ENCODE measurements at regions of chr6 and their contacts with region 1.

Region 1: GRCh38 chr6:134193536-134194498 is 124.1 kb downstream of the SGK1 start:
- DNase-seq: no peak
- H3K4me3 Mint-ChIP-seq: no peak overlapping the region
- H3K27ac Mint-ChIP-seq: no peak overlapping the region
- H3K4me1 Mint-ChIP-seq: peaks cover 10% of the 10 kb centered on the region
- H3K27me3 Mint-ChIP-seq: no peaks in the 10 kb centered on the region

Region 2: DNA sequence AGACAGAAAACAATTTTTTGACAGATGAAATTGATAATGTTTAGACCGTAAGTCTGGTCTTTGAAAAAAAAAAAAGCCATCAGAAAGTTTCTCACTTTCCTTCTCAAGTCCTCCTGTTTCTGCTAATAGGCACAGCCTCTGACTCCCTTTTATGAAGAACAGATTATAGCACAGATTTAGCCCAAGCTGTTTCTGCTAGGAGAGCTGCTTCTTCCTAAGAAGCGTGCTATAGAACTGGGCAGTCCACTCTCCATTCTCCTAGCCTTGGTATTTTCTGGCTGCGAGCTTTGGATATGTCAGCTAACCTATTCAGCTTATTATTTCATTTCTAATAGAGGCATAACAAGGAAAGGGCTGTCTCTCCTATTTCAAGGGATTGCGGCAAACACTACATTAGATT is 11.5 kb after region 1 on chr6:
- CTCF ChIA-PET with region 1: interaction called, 13 read pairs
- POLR2A ChIA-PET with region 1: no interaction called
- DNase-seq: no peak
- H3K4me3 Mint-ChIP-seq: no peak overlapping the region
- H3K27ac Mint-ChIP-seq: no peak overlapping the region
- H3K4me1 Mint-ChIP-seq: no peaks in the 10 kb centered on the region
- H3K27me3 Mint-ChIP-seq: no peaks in the 10 kb centered on the region